Activated CD8-positive, alpha-beta memory T cell treated with anti-CD3 and anti-CD28 coated beads, Interleukin-2, amount 10 ng/mL, durations not matched to agents 7 days and 5 days (primary cell): ENCODE measurements at regions of chr3 and their contacts with region 1.

Region 1: DNA sequence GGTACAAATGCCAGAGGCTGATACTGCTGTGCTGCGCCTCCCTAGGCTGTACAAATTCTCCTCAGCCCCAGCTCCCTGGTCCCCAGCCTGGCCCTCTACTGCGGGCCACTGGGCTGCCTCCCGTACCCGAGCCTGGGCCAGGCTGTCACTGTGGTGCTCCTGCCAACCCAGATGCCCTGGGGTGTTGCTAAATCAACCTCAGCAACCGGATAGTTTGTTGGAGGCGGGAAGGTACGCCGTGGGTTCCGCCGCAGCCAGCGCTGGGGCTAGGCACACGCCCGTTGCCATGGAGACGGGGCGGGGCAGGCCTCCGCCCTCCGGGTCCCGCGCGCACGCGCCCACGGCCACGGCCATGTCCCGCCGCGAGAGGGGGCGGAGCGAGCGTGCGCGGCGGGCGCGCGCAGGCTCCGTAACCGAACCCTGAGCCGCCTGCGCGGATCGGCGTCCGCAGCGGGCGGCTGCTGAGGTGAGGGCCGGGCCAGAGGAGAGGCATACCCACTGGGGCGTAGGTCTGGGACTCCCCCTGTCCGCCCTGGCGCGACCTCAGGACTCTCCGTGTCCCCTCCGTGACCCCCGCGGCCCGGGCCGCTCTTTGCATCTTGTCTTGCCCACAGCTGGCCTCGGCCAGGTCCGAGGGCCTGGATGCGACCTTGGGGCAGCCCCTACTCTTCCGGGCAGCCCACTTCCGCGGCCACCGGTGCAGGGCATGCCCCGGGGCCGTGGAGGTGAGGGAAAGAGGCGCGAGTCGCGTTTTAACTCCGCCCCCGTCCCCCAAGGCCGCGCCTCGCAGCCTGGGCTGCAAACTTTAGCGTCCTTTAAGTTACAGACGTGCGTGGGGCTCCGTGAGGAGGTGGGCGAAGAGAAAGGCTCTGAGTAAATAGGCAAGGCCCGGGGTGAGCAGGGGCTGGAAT is at the start of gene TEX264:
- DNase-seq: peak; percentile 93
- ATAC-seq: peak; percentile 72
- H3K4me3 Mint-ChIP-seq: peak within 1 kb of the TSS; percentile 89
- H3K27ac Mint-ChIP-seq: peak within 1 kb of the TSS; percentile 87
- H3K4me1 Mint-ChIP-seq: peaks cover 61% of the 10 kb centered on the region
- H3K27me3 Mint-ChIP-seq: no peaks in the 10 kb centered on the region
- total RNA-seq, gene TEX264: 58.8 to 66.5 TPM

Region 2: GRCh38 chr3:51391075-51391567 is 280.0 kb before region 1 on chr3 and contains the start of gene RBM15B:
- CTCF ChIA-PET with region 1: interaction called, 17 read pairs
- DNase-seq: peak; percentile 98
- ATAC-seq: peak; percentile 93
- H3K4me3 Mint-ChIP-seq: peak within 1 kb of the TSS; percentile 85
- H3K27ac Mint-ChIP-seq: peak within 1 kb of the TSS; percentile 88
- H3K4me1 Mint-ChIP-seq: peaks cover 82% of the 10 kb centered on the region
- H3K27me3 Mint-ChIP-seq: no peaks in the 10 kb centered on the region
- total RNA-seq, gene RBM15B: 28.7 to 36.1 TPM

Region 3: GRCh38 chr3:51498876-51499738 is 172.0 kb before region 1 on chr3:
- CTCF ChIA-PET with region 1: interaction called, 155 read pairs
- DNase-seq: peak; percentile 93
- ATAC-seq: peak; percentile 73
- H3K4me3 Mint-ChIP-seq: peak overlapping the region; percentile 99
- H3K27ac Mint-ChIP-seq: peak overlapping the region; percentile 92
- H3K4me1 Mint-ChIP-seq: peaks cover 25% of the 10 kb centered on the region
- H3K27me3 Mint-ChIP-seq: no peaks in the 10 kb centered on the region

Region 4: DNA sequence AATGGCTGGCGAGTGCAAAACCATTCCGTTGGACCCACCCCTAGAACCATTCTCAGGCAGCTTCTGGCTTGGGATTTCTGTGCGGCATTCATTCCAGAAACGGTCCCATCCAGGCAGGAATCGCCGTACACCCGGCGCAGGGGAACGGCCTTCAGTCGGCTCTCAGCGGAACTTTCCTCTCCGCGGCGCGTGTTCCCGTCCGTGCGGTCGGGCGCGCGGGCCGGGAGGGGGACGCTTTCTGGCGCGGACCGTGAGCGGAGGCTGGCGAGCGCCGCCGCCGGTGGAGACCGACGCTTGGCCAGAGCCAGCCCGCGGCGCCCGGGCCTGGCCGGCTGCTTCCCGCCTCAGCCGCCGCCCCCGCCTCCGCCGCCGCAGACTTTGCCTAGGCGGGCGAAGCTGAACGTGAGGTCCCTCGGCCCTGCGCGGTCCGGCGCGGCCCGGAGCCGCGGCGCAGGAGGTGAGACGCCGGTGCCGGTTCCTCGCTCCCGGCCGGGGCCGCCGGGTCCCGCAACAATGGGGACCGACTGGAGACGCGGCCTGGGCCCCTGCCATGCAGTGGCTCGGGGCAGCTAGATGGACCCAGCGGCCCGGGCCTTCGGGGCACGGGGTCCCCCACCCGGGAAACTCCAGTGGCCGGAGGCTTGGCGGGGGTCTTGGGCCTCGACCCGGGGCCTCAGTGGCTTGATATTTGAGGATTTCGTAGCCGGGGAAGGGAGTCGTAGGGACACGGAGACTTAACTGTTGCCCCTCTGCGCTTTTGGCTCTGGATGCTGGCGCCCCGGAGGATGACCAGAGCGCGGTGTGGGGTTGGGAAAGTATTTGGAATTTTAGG is 132.4 kb before region 1 on chr3 and contains the start of gene RAD54L2:
- CTCF ChIA-PET with region 1: interaction called, 25 read pairs
- DNase-seq: peak; percentile 81
- ATAC-seq: peak; percentile 92
- H3K4me3 Mint-ChIP-seq: peak within 1 kb of the TSS; percentile 81
- H3K27ac Mint-ChIP-seq: peak within 1 kb of the TSS; percentile 84
- H3K4me1 Mint-ChIP-seq: peaks cover 32% of the 10 kb centered on the region
- H3K27me3 Mint-ChIP-seq: no peaks in the 10 kb centered on the region
- total RNA-seq, gene RAD54L2: 34.0 to 35.1 TPM

Region 5: DNA sequence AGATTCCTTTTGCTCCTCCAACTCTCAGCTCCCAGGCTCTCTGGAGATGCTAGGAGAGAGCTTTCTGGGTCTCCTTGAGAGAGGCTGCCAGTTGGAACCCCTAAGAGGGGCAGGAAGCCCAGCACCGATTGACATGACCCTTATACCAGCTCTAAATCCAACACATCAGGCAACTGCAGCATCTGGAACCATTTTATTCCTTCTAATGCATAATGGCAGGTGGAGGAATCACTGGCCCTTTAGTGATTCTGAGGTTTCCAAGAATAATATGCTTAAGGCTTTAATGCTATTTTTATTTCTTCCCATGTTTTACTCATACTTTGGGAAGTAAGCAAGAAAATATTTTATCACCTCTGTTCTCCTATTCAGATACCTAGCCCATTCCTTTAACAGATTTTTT is 60.4 kb before region 1 on chr3:
- CTCF ChIA-PET with region 1: no interaction called
- DNase-seq: no peak
- ATAC-seq: no peak
- H3K4me3 Mint-ChIP-seq: no peak overlapping the region
- H3K27ac Mint-ChIP-seq: no peak overlapping the region
- H3K4me1 Mint-ChIP-seq: peaks cover 10% of the 10 kb centered on the region
- H3K27me3 Mint-ChIP-seq: no peaks in the 10 kb centered on the region

Region 6: GRCh38 chr3:51637941-51638471 is 33.1 kb before region 1 on chr3:
- CTCF ChIA-PET with region 1: interaction called, 45 read pairs
- DNase-seq: peak; percentile 59
- ATAC-seq: peak; percentile 67
- H3K4me3 Mint-ChIP-seq: no peak overlapping the region
- H3K27ac Mint-ChIP-seq: no peak overlapping the region
- H3K4me1 Mint-ChIP-seq: no peaks in the 10 kb centered on the region
- H3K27me3 Mint-ChIP-seq: no peaks in the 10 kb centered on the region

Region 7: DNA sequence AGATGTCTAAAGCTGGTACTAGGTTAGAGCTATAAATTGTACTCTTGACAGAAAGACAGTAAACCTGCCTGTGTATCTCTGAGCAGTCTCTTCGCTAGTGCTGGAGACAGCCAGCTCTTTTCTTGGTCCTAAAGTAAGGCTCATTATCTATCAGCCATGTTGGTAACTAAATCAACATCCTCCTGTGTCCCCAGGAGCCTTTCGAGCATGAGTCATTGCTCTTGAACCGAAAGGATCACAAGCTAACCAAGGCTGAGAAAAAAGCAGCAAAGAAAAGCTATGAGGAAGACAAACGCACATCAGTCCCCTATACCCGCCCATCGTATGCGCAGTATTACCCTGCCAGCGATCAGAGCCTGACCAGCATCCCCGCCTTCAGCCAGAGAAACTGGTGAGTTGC is 25.0 kb before region 1 on chr3:
- CTCF ChIA-PET with region 1: interaction called, 45 read pairs
- DNase-seq: no peak
- ATAC-seq: no peak
- H3K4me3 Mint-ChIP-seq: no peak overlapping the region
- H3K27ac Mint-ChIP-seq: no peak overlapping the region
- H3K4me1 Mint-ChIP-seq: no peaks in the 10 kb centered on the region
- H3K27me3 Mint-ChIP-seq: no peaks in the 10 kb centered on the region

Region 8: DNA sequence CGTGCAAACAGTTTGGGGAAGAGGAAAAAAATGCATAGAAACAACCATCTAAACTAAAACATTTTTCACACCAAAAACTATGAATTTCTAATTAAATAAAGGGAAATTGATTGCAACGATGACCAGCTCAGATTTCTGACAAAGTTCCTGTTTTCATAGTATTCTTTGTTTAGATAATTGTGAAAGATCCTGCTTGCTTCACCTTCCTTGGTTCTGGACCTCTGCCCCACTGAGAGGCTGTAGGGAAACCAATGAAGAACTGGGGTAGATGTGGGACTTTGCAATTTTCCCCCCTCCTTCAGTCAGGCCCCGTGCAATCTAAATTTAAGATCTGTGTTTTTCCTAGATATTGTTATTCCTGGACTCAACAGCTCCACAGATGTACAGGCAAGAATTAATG is 13.8 kb before region 1 on chr3:
- CTCF ChIA-PET with region 1: interaction called, 17 read pairs
- DNase-seq: no peak
- ATAC-seq: no peak
- H3K4me3 Mint-ChIP-seq: no peak overlapping the region
- H3K27ac Mint-ChIP-seq: no peak overlapping the region
- H3K4me1 Mint-ChIP-seq: no peaks in the 10 kb centered on the region
- H3K27me3 Mint-ChIP-seq: no peaks in the 10 kb centered on the region